Prostate gland (tissue), 2 donors: ENCODE measurements at regions of chr11 and their contacts with region 1.

Region 1: DNA sequence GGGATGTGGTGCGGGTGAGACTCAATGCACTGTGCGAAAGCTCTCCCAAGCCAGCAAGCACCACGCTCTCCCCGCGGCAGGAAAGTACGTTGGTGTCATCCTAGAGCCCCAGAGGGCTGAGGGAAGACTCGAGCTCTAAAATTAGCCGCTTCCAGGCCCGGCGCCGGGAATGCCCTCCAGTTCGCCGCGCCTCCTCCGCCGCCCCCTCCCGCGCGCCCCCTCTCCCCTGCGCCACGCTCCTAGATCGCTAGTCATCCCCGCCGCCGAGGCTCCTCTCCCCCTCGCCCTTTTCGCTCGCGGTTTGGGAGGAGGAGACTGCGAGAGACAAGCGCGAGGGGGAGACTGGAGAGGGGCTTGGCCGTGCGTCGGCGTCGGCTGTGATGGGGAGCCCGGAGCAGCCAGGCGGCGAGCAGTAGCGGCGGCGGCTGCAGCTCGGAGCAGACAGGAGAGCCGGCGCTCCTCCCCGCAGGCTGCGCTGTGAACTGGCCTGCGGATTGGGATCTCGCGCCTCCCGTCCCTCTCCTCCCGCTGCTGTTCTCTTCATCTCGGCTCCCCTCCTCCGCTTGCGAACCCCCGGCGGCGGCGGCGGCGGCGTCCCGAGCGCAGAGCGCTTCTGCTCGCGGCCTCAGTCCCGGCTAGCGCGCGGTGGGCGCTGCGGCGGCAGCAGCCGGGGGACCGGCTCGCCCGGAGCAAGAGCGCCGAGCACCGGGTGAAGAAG is at the start of gene FAT3:
- DNase-seq: no peak
- H3K4me3 ChIP-seq: peak within 1 kb of the TSS; percentile 33 to 35
- H3K27ac ChIP-seq: peak within 1 kb of the TSS; percentile 30 to 50
- H3K4me1 ChIP-seq: no peaks in the 10 kb centered on the region
- H3K27me3 ChIP-seq: peaks cover 17% of the 10 kb centered on the region
- CTCF ChIP-seq: no peak
- POLR2A ChIP-seq: no peak
- total RNA-seq, gene FAT3: 9.6 to 14.4 TPM

Region 2: GRCh38 chr11:92329646-92330045 is 105.1 kb after region 1 on chr11:
- intact Hi-C with region 1: loop called (anchors 10 kb)
- DNase-seq: peak; percentile 14
- H3K4me3 ChIP-seq: no peak overlapping the region
- H3K27ac ChIP-seq: no peak overlapping the region
- H3K4me1 ChIP-seq: no peaks in the 10 kb centered on the region
- H3K27me3 ChIP-seq: no peaks in the 10 kb centered on the region
- CTCF ChIP-seq: no peak
- POLR2A ChIP-seq: no peak

Region 3: GRCh38 chr11:92453055-92453454 is 228.5 kb after region 1 on chr11:
- intact Hi-C with region 1: loop called (anchors 10 kb)
- DNase-seq: no peak
- H3K4me3 ChIP-seq: no peak overlapping the region
- H3K27ac ChIP-seq: no peak overlapping the region
- H3K4me1 ChIP-seq: no peaks in the 10 kb centered on the region
- H3K27me3 ChIP-seq: no peaks in the 10 kb centered on the region
- CTCF ChIP-seq: no peak
- POLR2A ChIP-seq: no peak

Region 4: GRCh38 chr11:92552942-92553341 is 328.4 kb after region 1 on chr11:
- intact Hi-C with region 1: loop called (anchors 10 kb)
- DNase-seq: no peak
- H3K4me3 ChIP-seq: no peak overlapping the region
- H3K27ac ChIP-seq: no peak overlapping the region
- H3K4me1 ChIP-seq: no peaks in the 10 kb centered on the region
- H3K27me3 ChIP-seq: no peaks in the 10 kb centered on the region
- CTCF ChIP-seq: peak in 2 of 4 experiments; percentile 24 to 29
- POLR2A ChIP-seq: no peak

Region 5: GRCh38 chr11:92670378-92670777 is 445.8 kb after region 1 on chr11:
- intact Hi-C with region 1: loop called (anchors 10 kb)
- DNase-seq: no peak
- H3K4me3 ChIP-seq: no peak overlapping the region
- H3K27ac ChIP-seq: no peak overlapping the region
- H3K4me1 ChIP-seq: no peaks in the 10 kb centered on the region
- H3K27me3 ChIP-seq: no peaks in the 10 kb centered on the region
- CTCF ChIP-seq: no peak
- POLR2A ChIP-seq: no peak

Region 6: DNA sequence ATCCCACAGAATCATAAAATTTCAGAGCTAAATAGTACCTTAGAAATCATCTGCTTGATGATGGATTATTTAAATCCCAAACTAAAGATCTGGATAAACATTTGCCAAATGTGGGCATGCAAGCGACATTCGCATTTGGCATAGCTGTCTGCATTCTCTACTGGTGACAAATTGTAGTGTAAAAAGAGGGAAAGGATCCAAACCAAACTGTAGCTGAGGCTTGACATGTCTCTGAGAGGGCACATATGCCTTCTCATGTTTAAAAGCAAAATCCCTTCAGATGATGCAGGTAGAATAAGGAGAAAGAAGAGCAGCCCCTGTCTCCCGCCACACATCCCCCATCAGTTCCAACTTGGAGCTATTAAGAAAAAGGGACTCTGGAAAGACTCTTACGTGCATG is 487.4 kb after region 1 on chr11:
- intact Hi-C with region 1: no loop called
- DNase-seq: no peak
- H3K4me3 ChIP-seq: no peak overlapping the region
- H3K27ac ChIP-seq: no peak overlapping the region
- H3K4me1 ChIP-seq: no peaks in the 10 kb centered on the region
- H3K27me3 ChIP-seq: no peaks in the 10 kb centered on the region
- CTCF ChIP-seq: no peak
- POLR2A ChIP-seq: no peak

Region 7: GRCh38 chr11:92865352-92865751 is 640.8 kb after region 1 on chr11:
- intact Hi-C with region 1: loop called (anchors 5 kb)
- DNase-seq: no peak
- H3K4me3 ChIP-seq: no peak overlapping the region
- H3K27ac ChIP-seq: no peak overlapping the region
- H3K4me1 ChIP-seq: no peaks in the 10 kb centered on the region
- H3K27me3 ChIP-seq: no peaks in the 10 kb centered on the region
- CTCF ChIP-seq: no peak
- POLR2A ChIP-seq: no peak